ENCODE measurements at regions of chr13 and their contacts with region 1.

Region 1: GRCh38 chr13:75549262-75550158 is at the start of gene UCHL3:
- H3K4me3 Mint-ChIP-seq: peak within 1 kb of the TSS; percentile 94
- H3K27ac Mint-ChIP-seq: peak within 1 kb of the TSS; percentile 95
- H3K4me1 Mint-ChIP-seq: peaks cover 36% of the 10 kb centered on the region
- H3K27me3 Mint-ChIP-seq: no peaks in the 10 kb centered on the region

Region 2: DNA sequence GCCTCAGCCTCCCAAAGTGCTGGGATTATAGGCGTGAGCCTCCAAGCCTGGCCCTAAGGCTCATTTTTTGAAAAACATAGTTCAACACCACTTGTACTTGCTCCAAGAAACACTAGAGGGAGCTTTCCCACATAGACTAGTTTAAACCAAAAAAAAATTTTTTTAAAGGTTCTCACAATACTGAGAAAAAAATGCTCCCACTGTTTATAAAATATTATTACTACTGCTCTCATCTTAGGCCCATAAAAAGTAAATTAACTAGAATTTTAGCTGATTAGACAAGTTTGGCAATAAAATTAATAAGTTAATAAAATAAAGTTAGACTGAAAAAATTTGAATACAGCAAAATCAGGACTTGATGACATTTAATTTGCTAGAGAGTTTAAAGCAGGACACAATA is 177.0 kb before region 1 on chr13:
- intact Hi-C with region 1: loop called (anchors 2 kb)
- H3K4me3 Mint-ChIP-seq: no peak overlapping the region
- H3K27ac Mint-ChIP-seq: no peak overlapping the region
- H3K4me1 Mint-ChIP-seq: no peaks in the 10 kb centered on the region
- H3K27me3 Mint-ChIP-seq: no peaks in the 10 kb centered on the region

Region 3: GRCh38 chr13:75482070-75482819 is 67.3 kb before region 1 on chr13 and contains the start of gene TBC1D4:
- intact Hi-C with region 1: loop called (anchors 2 kb)
- H3K4me3 Mint-ChIP-seq: peak within 1 kb of the TSS; percentile 84
- H3K27ac Mint-ChIP-seq: peak within 1 kb of the TSS; percentile 90
- H3K4me1 Mint-ChIP-seq: peaks cover 34% of the 10 kb centered on the region
- H3K27me3 Mint-ChIP-seq: peaks cover 55% of the 10 kb centered on the region

Region 4: DNA sequence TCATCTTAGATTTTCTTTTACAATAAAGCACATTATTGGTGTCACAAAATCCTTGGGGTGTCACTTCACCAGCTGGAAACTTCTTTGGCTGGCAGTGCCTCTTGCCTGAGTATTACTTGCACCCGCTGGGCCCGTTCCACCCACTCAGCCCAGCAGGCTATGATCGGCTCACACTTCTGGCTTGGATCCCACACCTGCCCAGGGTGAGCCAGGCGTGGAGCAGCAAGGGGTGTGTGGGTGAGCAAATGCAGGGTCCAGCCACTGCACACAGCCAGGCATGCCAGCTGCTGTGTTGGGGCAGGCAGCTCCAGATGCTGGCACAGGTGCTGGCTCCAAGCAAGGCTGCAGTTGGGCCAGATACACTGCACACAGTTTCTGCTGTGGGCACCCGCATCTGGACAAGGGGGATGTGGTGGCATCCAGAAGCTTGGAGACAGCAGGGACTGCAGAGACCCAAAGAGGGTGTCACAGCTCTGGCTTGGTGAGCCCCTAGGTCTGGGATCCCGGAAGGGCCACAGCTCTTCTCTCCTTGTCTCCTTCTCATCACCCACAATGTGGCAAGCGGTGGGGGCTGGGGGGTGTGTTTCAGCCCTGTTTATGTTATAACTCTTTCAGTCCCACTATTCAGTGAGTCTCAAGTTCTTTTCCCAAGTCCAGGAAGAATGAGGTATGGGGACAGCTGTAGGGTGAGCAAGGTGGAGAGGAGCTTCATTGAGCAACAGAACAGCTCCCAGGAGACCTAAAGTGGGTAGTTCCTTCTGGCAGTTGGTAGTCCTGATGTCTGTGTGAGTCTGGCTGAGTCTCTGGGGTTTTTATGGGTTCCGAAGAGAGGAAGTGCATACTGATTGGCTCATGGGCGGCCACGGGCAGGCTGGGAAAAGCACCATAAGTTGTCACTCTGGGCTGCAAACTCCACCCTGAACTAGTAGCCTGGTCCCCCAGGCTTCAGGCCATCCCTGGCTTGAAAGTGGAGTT is 42.2 kb before region 1 on chr13:
- intact Hi-C with region 1: loop called (anchors 5 kb)
- H3K4me3 Mint-ChIP-seq: no peak overlapping the region
- H3K27ac Mint-ChIP-seq: peak overlapping the region; percentile 31
- H3K4me1 Mint-ChIP-seq: peaks cover 41% of the 10 kb centered on the region
- H3K27me3 Mint-ChIP-seq: peaks cover 5% of the 10 kb centered on the region

Region 5: DNA sequence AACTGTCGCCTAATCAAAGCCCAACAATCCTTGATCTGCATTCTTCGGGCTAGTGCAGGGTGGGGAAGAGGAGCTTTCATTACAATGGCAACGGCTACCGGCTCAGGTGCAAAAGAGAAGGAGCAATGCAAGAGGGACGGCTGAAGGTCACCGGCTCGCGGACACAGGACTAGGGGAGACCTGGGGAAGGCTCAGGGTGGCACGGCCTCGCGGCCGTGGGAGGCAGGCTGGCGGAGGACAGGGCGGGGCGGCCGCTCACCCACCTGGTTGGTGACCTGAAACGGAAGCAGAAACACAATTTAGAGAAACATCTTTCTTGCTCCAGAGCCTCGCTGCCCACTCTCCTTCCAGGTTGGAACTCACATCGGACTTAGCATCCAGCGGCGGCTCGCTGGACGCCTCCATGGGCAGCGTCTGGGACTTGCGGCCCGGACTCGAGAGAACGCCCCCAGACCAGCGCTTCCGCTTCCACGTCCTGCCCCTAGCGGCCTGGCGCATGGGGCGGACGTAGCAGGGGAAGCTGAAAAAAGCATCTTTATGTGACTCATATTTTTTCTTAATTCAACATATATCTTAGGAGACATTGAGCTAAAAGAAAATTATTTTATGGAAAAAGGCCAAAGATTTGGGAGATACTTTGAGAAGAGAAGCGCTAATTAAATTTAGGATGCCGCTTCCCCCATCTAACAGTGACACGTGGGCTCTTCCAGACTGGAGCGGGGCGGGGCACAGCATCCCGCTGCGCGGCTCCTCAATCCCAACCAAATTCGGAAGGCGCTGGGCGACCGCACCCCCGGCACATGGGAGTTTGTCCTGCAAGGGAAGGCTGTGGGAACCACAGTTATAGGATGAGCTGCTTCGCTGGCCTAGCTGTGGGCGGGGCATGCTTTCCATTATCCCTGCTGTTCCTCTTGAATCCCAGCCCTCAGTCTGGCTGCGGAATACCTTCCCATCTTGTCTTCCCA is 11.8 kb before region 1 on chr13 and contains the start of gene COMMD6:
- intact Hi-C with region 1: loop called (anchors 1 kb)
- H3K4me3 Mint-ChIP-seq: peak within 1 kb of the TSS; percentile 99
- H3K27ac Mint-ChIP-seq: peak within 1 kb of the TSS; percentile 96
- H3K4me1 Mint-ChIP-seq: peaks cover 34% of the 10 kb centered on the region
- H3K27me3 Mint-ChIP-seq: no peaks in the 10 kb centered on the region

Region 6: GRCh38 chr13:77386880-77387606 is 1837.5 kb after region 1 on chr13:
- intact Hi-C with region 1: no loop called
- H3K4me3 Mint-ChIP-seq: no peak overlapping the region
- H3K27ac Mint-ChIP-seq: peak overlapping the region; percentile 82
- H3K4me1 Mint-ChIP-seq: peaks cover 50% of the 10 kb centered on the region
- H3K27me3 Mint-ChIP-seq: peaks cover 6% of the 10 kb centered on the region